Left colon (tissue), 2 donors: ENCODE measurements at regions of chr3 and their contacts with region 1.

Region 1: DNA sequence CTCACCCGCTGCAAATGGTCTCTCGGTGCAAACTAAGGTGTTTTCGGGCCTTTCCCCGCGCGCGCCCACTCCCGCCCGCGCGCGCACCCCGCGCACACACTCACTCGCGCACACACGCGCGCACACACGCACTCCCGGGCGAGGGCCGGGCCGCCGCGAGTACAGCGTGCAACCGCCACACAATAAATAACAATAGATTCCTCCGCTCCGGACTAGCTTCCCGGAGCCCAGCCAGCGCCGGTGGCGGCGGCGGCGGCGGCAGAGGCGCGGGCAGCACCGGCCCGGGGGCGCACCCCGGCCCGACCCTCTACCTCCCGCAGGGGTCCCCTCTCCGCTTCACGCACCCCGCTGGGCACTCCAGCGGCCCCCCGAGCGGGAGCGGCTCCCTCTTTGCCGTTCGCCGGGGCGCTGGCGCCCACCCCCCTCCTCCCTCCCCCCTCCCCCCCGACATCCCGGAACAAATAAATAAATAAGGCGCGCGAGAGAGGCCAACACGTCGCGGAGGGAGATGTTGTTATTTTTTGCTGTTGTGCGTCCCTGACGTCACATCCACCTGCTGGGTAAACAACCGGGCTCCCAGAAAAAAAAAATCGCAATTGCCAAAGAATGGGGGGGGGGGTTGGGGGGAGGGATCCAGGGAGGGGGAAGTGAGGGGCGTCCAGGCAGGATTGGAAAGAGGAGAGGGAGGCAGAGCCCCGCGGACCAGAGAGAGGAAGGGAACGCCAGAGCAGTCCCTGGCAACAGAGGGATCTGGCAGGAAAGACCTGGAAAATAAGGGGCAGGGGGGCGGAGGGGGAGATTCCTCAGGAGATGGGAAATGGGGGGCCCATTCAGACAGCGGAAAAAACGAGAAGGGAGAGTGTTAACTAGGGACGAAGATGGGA is at the start of gene FOXP1:
- DNase-seq: peak; percentile 78 to 80
- ATAC-seq: peak; percentile 73
- total RNA-seq, gene FOXP1: 131 to 135 TPM

Region 2: GRCh38 chr3:70684701-70685100 is 899.1 kb before region 1 on chr3:
- intact Hi-C with region 1: no loop called
- DNase-seq: no peak
- ATAC-seq: no peak

Region 3: DNA sequence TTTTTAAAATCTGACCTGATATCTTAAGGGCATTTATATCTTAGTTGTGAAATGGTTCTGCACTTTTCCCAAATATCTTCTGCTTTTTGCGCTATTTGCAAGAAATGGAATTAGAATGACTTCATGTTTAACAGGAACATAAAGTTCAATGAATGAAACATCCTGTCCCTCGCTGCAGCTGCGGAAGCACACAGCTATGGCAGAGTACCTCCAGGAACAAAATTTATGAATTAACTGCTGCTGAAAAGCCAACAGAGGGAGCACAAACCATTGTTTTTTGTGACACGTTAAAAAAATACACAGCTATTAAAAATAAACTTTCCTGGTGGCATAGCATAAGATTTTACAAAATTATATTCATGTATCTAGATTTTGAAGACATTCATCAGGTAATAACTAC is 867.0 kb before region 1 on chr3:
- intact Hi-C with region 1: loop called in 1 of 2 experiments (anchors 5 kb)
- DNase-seq: no peak
- ATAC-seq: no peak

Region 4: GRCh38 chr3:71064288-71064955 is 519.4 kb before region 1 on chr3:
- intact Hi-C with region 1: loop called in 1 of 2 experiments (anchors 10 kb)
- DNase-seq: peak in 1 of 2 donors; percentile 63
- ATAC-seq: peak; percentile 53

Region 5: GRCh38 chr3:71130471-71131374 is 453.1 kb before region 1 on chr3:
- intact Hi-C with region 1: loop called in 1 of 2 experiments (anchors 5 kb)
- DNase-seq: peak; percentile 77 to 78
- ATAC-seq: peak; percentile 61

Region 6: GRCh38 chr3:71305231-71306206 is 278.3 kb before region 1 on chr3:
- intact Hi-C with region 1: loop called in 1 of 2 experiments (anchors 10 kb)
- DNase-seq: peak; percentile 33 to 34
- ATAC-seq: peak; percentile 56

Region 7: DNA sequence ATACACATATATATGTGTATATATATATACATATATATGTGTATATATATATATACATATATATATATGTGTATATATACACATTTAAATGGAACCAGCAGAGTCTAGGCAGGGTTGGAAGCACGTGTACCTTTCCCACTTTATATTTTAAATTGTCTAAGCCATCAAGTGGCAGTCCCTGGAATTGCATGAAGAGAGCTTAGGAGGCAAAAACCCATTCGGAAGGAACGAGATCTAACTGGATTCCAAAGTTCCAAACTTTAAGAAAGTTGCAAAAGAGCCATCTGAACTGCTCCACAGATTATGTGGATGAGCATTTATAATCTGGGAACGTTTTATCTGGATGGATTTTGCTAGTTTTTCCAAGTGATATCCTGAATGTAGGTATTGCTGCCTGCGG is 186.8 kb before region 1 on chr3:
- intact Hi-C with region 1: loop called in 1 of 2 experiments (anchors 10 kb)
- DNase-seq: peak in 1 of 2 donors; percentile 50
- ATAC-seq: peak; percentile 55

Region 8: DNA sequence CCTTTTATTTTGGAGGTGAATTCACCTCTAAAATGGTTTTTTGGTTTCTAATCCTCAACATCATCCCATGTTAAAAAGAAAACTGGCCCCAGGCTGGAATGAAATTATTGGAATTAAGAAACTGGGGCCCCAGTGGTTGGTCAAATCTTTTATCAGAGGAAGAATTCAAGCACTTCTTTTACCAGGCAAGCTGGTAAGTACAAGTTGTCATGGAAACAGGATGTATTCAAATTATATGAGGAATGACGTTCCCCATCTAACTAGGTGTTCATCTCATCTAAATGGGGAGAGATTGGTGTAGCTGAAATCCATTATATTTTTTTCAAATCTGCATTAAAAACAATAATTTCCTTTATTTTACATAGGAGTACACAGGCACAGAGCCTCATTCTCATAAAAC is 151.1 kb after region 1 on chr3:
- intact Hi-C with region 1: no loop called
- DNase-seq: no peak
- ATAC-seq: no peak